ENCODE measurements at regions of chr22 and their contacts with region 1.

Region 1: GRCh38 chr22:32848226-32848625 is 46.7 kb downstream of the TIMP3 start:
- DNase-seq: no peak
- H3K4me3 ChIP-seq: no peak overlapping the region
- H3K27ac ChIP-seq: no peak overlapping the region
- H3K4me1 ChIP-seq: no peaks in the 10 kb centered on the region
- H3K27me3 ChIP-seq: no peaks in the 10 kb centered on the region
- CTCF ChIP-seq: no peak

Region 2: GRCh38 chr22:31646186-31647089 is 1201.8 kb before region 1 on chr22:
- CTCF ChIA-PET with region 1: no interaction called
- POLR2A ChIA-PET with region 1: interaction called, 16 read pairs
- intact Hi-C with region 1: no loop called
- DNase-seq: peak; percentile 70 to 99
- H3K4me3 ChIP-seq: no peak overlapping the region; the same call in 1 of the 2 replicates
- H3K27ac ChIP-seq: peak overlapping the region; percentile 98
- H3K4me1 ChIP-seq: peaks cover 45% of the 10 kb centered on the region
- H3K27me3 ChIP-seq: no peaks in the 10 kb centered on the region
- CTCF ChIP-seq: no peak

Region 3: DNA sequence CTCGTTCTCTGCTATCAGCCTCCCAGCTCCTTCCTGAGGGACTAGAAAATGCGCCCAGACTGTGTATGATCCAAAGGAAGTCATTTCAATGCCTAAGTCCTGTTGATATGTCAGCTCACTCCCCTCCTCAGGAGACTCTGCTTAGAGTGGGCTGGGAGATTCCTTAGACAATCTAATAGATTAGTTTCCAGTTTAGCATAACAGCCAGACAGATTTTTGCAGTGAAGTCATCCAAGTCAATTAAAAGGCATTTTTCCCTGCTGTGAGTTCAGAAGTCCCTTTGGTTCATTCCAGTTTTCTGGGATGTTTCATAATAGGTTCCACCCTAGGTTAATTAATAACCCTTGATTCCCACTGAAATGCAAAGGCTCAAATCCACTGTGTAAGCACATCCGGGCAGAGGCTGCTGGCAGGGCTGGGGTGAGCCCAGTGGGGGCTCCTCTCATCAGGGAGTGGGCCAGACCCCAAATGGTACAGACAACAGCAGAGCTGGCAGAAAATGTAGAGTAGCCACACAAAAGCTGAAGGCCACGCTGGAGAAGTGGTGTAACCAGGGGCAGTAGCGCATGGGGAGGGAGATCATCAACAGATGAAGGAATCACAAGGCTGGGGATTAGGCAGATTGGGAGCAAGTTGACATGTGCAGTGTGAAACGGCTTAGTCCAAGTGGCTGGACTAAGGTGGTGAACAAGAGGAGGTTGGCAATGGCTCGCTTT is 119.3 kb after region 1 on chr22:
- CTCF ChIA-PET with region 1: no interaction called
- POLR2A ChIA-PET with region 1: no interaction called
- intact Hi-C with region 1: no loop called
- DNase-seq: no peak
- H3K4me3 ChIP-seq: no peak overlapping the region
- H3K27ac ChIP-seq: no peak overlapping the region
- H3K4me1 ChIP-seq: peaks cover 11% of the 10 kb centered on the region
- H3K27me3 ChIP-seq: no peaks in the 10 kb centered on the region
- CTCF ChIP-seq: no peak